ENCODE measurements at regions of chr19 and their contacts with region 1.

Region 1: GRCh38 chr19:45770192-45771101 is 1.4 kb upstream of the SIX5 start:
- DNase-seq: peak; percentile 99
- H3K4me3 ChIP-seq: peak overlapping the region; percentile 76
- H3K4me3 Mint-ChIP-seq: peak overlapping the region; percentile 97
- H3K27ac Mint-ChIP-seq: peak overlapping the region; percentile 96
- H3K4me1 ChIP-seq: peaks cover 6% of the 10 kb centered on the region
- H3K4me1 Mint-ChIP-seq: peaks cover 7% of the 10 kb centered on the region
- H3K27me3 ChIP-seq: no peaks in the 10 kb centered on the region
- H3K27me3 Mint-ChIP-seq: no peaks in the 10 kb centered on the region
- CTCF ChIP-seq: peak; percentile 95 to 98

Region 2: GRCh38 chr19:45692187-45693105 is 78.0 kb before region 1 on chr19 and contains the start of gene QPCTL:
- CTCF ChIA-PET with region 1: interaction called, 25 read pairs
- POLR2A ChIA-PET with region 1: interaction called, 40 read pairs
- intact Hi-C with region 1: loop called (anchors 1 kb)
- DNase-seq: peak; percentile 98 to 99
- H3K4me3 ChIP-seq: peak within 1 kb of the TSS; percentile 95
- H3K4me3 Mint-ChIP-seq: peak within 1 kb of the TSS; percentile 83
- H3K27ac Mint-ChIP-seq: peak within 1 kb of the TSS; percentile 93
- H3K4me1 ChIP-seq: peaks cover 4% of the 10 kb centered on the region; the same call in 1 of the 2 replicates
- H3K4me1 Mint-ChIP-seq: no peaks in the 10 kb centered on the region
- H3K27me3 ChIP-seq: no peaks in the 10 kb centered on the region
- H3K27me3 Mint-ChIP-seq: no peaks in the 10 kb centered on the region
- CTCF ChIP-seq: no peak
- total RNA-seq, gene QPCTL: 16.9 and 20.2 TPM in 2 replicates

Region 3: DNA sequence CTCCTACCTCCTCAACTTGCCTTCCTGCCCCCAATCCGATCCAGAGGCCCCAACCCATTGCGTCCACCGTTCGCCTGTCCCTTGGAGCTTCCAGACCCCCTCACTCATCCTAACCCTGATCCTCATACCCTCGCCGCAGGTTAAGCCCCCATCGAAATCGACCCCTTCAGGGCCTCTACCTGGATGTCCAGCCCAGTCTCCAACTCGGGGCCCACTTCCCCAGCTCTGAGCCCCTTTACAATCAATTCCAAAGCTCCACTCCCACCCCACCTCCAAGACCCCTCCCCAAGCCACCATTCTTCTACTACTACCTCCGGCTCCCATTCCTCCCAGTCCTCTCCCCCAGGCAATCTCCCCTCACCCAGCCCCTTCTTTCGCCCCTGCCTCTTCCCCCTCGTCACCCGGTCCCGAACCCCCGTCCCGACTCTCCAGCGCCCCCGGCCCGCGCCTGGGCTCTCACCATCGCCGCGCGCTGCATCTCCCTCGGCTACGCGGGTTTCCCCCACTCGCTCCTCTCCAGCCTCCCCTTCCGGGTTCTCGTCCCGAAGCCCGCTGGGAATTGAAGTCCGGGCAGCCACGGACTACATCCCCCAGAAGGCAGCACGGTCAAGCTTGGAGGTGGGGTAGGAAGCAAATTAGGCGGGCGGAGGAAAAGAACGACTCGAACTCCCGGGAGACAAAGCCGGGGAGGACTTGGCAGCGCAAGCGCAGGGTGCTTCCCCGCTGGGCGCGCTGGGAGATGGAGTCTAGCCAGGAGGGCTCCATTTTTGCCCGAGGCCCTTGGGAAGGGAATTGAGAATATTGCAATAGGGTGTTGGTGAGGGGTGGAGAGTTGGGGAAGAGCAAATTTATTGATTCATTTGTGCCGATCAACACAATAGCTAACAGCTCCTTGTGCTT is 39.8 kb before region 1 on chr19 and contains the start of gene FBXO46:
- CTCF ChIA-PET with region 1: interaction called, 12 read pairs
- POLR2A ChIA-PET with region 1: interaction called, 14 read pairs
- intact Hi-C with region 1: loop called (anchors 1 kb)
- DNase-seq: peak; percentile 97 to 99
- H3K4me3 ChIP-seq: peak within 1 kb of the TSS; percentile 57
- H3K4me3 Mint-ChIP-seq: peak within 1 kb of the TSS; percentile 86
- H3K27ac Mint-ChIP-seq: peak within 1 kb of the TSS; percentile 73
- H3K4me1 ChIP-seq: peaks cover under 1% of the 10 kb centered on the region
- H3K4me1 Mint-ChIP-seq: peaks cover 8% of the 10 kb centered on the region
- H3K27me3 ChIP-seq: no peaks in the 10 kb centered on the region
- H3K27me3 Mint-ChIP-seq: no peaks in the 10 kb centered on the region
- CTCF ChIP-seq: peak in 1 of 2 experiments; percentile 44
- total RNA-seq, gene FBXO46: 31.0 and 37.0 TPM in 2 replicates

Region 4: GRCh38 chr19:45792470-45793177 is 22.2 kb after region 1 on chr19 and contains the start of gene DMWD:
- CTCF ChIA-PET with region 1: interaction called, 33 read pairs
- POLR2A ChIA-PET with region 1: interaction called, 22 read pairs
- intact Hi-C with region 1: no loop called
- DNase-seq: peak; percentile 100
- H3K4me3 ChIP-seq: peak within 1 kb of the TSS; percentile 76
- H3K4me3 Mint-ChIP-seq: peak within 1 kb of the TSS; percentile 92
- H3K27ac Mint-ChIP-seq: peak within 1 kb of the TSS; percentile 79
- H3K4me1 ChIP-seq: peaks cover 3% of the 10 kb centered on the region; the same call in 1 of the 2 replicates
- H3K4me1 Mint-ChIP-seq: peaks cover 23% of the 10 kb centered on the region
- H3K27me3 ChIP-seq: no peaks in the 10 kb centered on the region
- H3K27me3 Mint-ChIP-seq: no peaks in the 10 kb centered on the region
- CTCF ChIP-seq: no peak
- total RNA-seq, gene DMWD: 72.4 and 76.3 TPM in 2 replicates

Region 5: GRCh38 chr19:45817010-45817724 is 46.7 kb after region 1 on chr19:
- CTCF ChIA-PET with region 1: interaction called, 35 read pairs
- POLR2A ChIA-PET with region 1: interaction called, 3 read pairs
- intact Hi-C with region 1: no loop called
- DNase-seq: peak; percentile 96 to 98
- H3K4me3 ChIP-seq: no peak overlapping the region
- H3K4me3 Mint-ChIP-seq: no peak overlapping the region
- H3K27ac Mint-ChIP-seq: no peak overlapping the region
- H3K4me1 ChIP-seq: peaks cover 6% of the 10 kb centered on the region; the same call in 1 of the 2 replicates
- H3K4me1 Mint-ChIP-seq: peaks cover 14% of the 10 kb centered on the region
- H3K27me3 ChIP-seq: no peaks in the 10 kb centered on the region
- H3K27me3 Mint-ChIP-seq: no peaks in the 10 kb centered on the region
- CTCF ChIP-seq: peak; percentile 97 to 99

Region 6: DNA sequence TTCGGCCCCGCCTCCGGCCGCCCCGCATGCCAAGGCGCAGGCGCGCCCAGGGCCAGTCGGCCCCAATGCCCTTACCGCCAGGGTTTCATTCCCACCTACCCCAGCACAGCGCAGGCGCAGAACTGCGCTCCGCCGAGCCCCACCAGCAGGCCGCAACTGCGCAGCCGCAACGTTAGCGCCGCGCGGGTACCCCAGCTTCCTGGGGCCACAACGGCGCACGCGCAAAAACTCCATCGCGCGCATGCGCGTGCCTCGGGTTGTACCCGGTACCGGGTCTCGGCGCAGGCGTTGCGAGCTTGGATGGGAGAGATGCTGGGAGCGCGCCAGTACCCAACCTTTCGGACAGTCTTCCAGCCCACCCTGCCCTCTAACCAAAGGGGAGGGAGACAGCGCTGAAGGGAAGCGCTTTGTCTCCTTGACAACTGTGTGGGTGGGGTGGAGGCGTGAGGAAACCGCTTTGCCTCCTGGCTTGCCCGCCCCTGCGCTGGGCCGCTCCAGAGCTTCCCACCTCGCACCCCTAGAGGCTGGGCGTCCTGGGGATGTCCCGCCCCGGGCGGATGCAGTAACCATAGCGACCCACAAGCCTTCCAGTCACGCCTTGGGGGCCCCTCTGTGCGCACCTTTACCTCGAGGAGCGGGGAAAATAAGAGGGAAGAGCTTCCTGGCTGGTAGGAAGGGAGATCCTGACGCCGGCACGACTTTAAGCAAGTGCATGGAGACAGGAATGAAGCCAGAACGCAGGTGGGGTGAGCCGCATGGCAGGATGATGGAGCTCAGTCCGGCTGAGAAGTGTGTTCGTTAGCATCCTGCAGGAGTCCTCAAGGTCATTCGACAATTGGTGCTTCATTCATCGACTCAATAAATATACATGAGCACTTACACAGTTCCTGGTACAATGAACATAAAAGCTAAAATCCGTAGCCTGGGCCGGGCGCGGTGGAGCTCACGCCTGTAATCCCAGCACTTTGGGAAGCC is 132.5 kb after region 1 on chr19:
- CTCF ChIA-PET with region 1: interaction called, 15 read pairs
- POLR2A ChIA-PET with region 1: no interaction called
- intact Hi-C with region 1: no loop called
- DNase-seq: peak; percentile 98 to 100
- H3K4me3 ChIP-seq: peak overlapping the region; percentile 92
- H3K4me3 Mint-ChIP-seq: peak overlapping the region; percentile 80
- H3K27ac Mint-ChIP-seq: peak overlapping the region; percentile 65
- H3K4me1 ChIP-seq: peaks cover 5% of the 10 kb centered on the region
- H3K4me1 Mint-ChIP-seq: no peaks in the 10 kb centered on the region
- H3K27me3 ChIP-seq: no peaks in the 10 kb centered on the region
- H3K27me3 Mint-ChIP-seq: no peaks in the 10 kb centered on the region
- CTCF ChIP-seq: no peak